ENCODE measurements at regions of chr5 and their contacts with region 1.

Region 1: DNA sequence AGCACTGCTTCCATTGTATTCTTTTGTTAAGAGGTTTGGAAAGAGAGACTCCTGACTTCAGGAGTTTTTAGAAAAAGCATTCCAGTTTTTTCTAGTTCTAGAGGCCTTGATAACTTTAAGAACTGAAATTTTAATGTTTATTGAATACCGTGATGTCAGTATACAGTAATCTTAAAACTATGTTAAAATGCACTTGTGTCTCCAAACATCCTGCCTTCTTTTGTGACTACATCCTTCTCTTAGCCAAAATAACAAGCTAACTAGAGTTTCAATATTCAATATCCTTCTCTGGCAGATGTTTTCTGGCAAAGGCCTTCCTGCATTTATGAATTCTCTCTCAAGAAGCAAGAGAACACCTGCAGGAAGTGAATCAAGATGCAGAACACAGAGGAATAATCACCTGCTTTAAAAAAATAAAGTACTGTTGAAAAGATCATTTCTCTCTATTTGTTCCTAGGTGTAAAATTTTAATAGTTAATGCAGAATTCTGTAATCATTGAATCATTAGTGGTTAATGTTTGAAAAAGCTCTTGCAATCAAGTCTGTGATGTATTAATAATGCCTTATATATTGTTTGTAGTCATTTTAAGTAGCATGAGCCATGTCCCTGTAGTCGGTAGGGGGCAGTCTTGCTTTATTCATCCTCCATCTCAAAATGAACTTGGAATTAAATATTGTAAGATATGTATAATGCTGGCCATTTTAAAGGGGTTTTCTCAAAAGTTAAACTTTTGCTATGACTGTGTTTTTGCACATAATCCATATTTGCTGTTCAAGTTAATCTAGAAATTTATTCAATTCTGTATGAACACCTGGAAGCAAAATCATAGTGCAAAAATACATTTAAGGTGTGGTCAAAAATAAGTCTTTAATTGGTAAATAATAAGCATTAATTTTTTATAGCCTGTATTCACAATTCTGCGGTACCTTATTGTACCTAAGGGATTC is 43.1 kb downstream of the NDFIP1 start:
- DNase-seq: peak; percentile 88
- H3K4me3 ChIP-seq: no peak overlapping the region
- H3K27ac ChIP-seq: no peak overlapping the region
- H3K4me1 ChIP-seq: peaks cover 24% of the 10 kb centered on the region
- H3K27me3 ChIP-seq: no peaks in the 10 kb centered on the region
- CTCF ChIP-seq: peak; percentile 95

Region 2: DNA sequence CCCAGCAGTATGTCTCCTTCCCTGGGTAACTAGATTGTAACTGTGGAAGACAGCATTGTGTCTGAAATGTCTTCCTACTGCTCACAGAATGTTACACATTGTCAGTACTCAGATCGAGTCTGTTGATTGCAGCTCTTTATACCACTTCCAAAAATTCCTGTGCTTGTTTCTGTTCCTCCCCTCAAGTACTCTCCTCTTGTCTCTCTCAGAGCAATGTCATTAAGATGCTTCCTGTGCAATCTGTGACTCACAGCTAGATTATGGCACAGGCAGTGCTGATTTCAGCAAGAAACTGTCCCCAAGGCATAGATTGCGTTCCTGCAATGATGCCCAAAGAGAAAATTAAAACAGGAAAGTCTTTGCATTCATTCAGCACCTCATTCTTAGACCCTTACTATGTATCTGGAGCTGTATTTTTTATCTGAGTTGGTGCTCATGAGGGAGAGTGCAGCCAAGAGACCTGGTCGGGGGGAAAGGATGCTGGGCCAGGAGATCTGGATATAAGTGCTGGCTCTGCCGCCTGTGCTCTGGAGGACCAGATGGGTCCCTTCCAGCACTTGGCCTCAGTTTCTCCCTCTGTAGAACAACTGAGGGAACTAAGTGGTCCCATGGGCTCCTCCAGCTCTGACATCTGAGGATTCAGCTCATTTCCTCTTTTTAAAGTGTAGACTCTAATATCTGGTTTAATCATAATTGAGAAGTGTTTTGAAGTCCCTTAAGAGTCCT is 98.1 kb before region 1 on chr5:
- CTCF ChIA-PET with region 1: no interaction called
- POLR2A ChIA-PET with region 1: no interaction called
- intact Hi-C with region 1: no loop called
- DNase-seq: peak; percentile 98
- H3K4me3 ChIP-seq: no peak overlapping the region
- H3K27ac ChIP-seq: peak overlapping the region; percentile 83
- H3K4me1 ChIP-seq: peaks cover 55% of the 10 kb centered on the region
- H3K27me3 ChIP-seq: no peaks in the 10 kb centered on the region
- CTCF ChIP-seq: no peak

Region 3: GRCh38 chr5:142186857-142187594 is 35.3 kb after region 1 on chr5:
- CTCF ChIA-PET with region 1: no interaction called
- POLR2A ChIA-PET with region 1: no interaction called
- intact Hi-C with region 1: no loop called
- DNase-seq: no peak
- H3K4me3 ChIP-seq: no peak overlapping the region
- H3K27ac ChIP-seq: no peak overlapping the region
- H3K4me1 ChIP-seq: no peaks in the 10 kb centered on the region
- H3K27me3 ChIP-seq: no peaks in the 10 kb centered on the region
- CTCF ChIP-seq: no peak

Region 4: DNA sequence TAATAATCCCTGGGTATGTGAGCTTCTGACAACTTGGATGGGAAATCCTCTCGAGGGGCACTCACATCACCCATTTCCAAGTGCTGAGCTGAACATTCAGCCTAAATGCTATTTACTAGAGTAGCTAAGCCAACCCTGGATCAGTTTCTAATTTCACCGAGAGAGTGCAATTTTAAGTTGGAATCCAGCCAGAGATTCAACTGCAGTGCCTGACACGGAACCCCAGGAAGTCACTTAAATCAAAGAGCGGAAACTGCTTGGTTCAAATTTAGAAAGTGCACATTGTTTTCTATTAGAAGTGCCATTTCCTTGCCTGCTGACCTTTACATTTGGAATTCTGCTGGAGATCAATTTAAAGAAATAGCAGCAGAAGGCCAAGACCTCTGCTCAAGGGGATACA is 164.3 kb after region 1 on chr5:
- CTCF ChIA-PET with region 1: no interaction called
- POLR2A ChIA-PET with region 1: no interaction called
- intact Hi-C with region 1: loop called (anchors 2 kb)
- DNase-seq: peak; percentile 98
- H3K4me3 ChIP-seq: peak overlapping the region; percentile 18
- H3K27ac ChIP-seq: peak overlapping the region; percentile 65
- H3K4me1 ChIP-seq: peaks cover 78% of the 10 kb centered on the region
- H3K27me3 ChIP-seq: no peaks in the 10 kb centered on the region
- CTCF ChIP-seq: no peak

Region 5: DNA sequence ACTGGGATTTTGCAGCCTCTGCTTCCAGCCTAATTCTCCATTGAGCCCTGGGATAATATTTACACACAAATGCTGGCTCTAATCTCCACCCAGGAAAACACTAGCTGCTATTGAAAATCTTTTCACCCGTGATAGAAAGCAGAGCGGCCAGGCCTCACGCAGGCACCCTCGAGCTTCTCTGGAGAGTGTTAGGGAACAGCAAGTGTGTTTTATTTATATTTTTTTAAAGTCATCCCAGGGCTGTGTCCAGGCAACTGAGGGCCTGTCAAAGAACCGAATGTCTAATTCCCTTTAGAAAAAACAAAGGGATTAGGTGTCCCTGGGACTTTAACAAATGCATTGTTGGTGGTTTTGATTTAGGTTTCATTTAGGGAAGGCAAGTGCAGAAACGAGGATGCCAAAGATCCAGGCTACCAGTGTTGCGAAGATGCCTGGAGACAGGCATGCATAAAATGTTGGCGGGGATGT is 224.3 kb after region 1 on chr5:
- CTCF ChIA-PET with region 1: no interaction called
- POLR2A ChIA-PET with region 1: no interaction called
- intact Hi-C with region 1: no loop called
- DNase-seq: no peak
- H3K4me3 ChIP-seq: no peak overlapping the region
- H3K27ac ChIP-seq: no peak overlapping the region
- H3K4me1 ChIP-seq: peaks cover 10% of the 10 kb centered on the region
- H3K27me3 ChIP-seq: no peaks in the 10 kb centered on the region
- CTCF ChIP-seq: no peak

Region 6: GRCh38 chr5:142432369-142432863 is 280.7 kb after region 1 on chr5:
- CTCF ChIA-PET with region 1: no interaction called
- POLR2A ChIA-PET with region 1: no interaction called
- intact Hi-C with region 1: loop called (anchors 10 kb)
- DNase-seq: no peak
- H3K4me3 ChIP-seq: no peak overlapping the region
- H3K27ac ChIP-seq: peak overlapping the region; percentile 58
- H3K4me1 ChIP-seq: peaks cover 59% of the 10 kb centered on the region
- H3K27me3 ChIP-seq: no peaks in the 10 kb centered on the region
- CTCF ChIP-seq: no peak

Region 7: GRCh38 chr5:142611154-142611553 is 459.4 kb after region 1 on chr5:
- CTCF ChIA-PET with region 1: no interaction called
- POLR2A ChIA-PET with region 1: no interaction called
- intact Hi-C with region 1: loop called (anchors 1 kb)
- DNase-seq: peak; percentile 73
- H3K4me3 ChIP-seq: no peak overlapping the region
- H3K27ac ChIP-seq: no peak overlapping the region
- H3K4me1 ChIP-seq: peaks cover 13% of the 10 kb centered on the region
- H3K27me3 ChIP-seq: no peaks in the 10 kb centered on the region
- CTCF ChIP-seq: peak; percentile 82

Region 8: DNA sequence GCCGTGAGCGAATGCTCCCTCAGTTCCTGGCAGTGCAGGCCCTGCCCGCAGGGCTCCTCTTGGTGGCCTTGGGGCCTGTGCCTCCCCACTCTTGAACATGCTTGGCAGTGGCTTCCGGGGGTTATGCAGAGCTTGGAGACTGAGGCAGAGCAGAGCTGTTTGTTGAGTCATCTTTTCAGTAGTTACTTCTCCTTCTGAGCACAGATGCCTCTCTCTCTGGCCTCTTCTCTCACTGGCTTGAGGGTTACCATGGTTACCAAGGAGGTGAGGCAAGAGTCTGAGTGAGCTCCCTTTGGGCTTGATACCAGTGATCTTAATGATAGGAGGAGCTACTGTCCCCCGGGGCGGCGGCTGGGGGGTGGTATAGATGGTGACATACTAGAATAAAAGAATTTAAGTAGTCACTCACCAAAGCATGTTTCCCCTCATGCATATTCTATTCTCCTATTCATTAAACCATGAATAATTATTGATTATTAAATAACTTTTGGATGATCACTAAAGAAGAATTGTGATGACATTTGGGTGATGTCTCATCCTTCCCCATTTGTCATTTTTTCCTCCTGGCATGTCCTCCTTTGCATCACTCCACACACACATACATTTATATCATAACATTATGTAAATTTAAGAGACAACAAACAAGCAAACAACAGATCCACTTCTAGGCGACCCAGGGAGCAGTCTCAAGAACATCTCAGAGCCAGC is 729.5 kb after region 1 on chr5:
- CTCF ChIA-PET with region 1: no interaction called
- POLR2A ChIA-PET with region 1: no interaction called
- intact Hi-C with region 1: loop called (anchors 5 kb)
- DNase-seq: peak; percentile 62
- H3K4me3 ChIP-seq: no peak overlapping the region
- H3K27ac ChIP-seq: no peak overlapping the region
- H3K4me1 ChIP-seq: peaks cover 29% of the 10 kb centered on the region
- H3K27me3 ChIP-seq: no peaks in the 10 kb centered on the region
- CTCF ChIP-seq: no peak

Measured in A673 (cell line).